WTC11 (cell line): ENCODE measurements at regions of chr14 and their contacts with region 1.

Region 1: GRCh38 chr14:71855399-71856036 is 76.7 kb upstream of the RGS6 start:
- DNase-seq: peak; percentile 87
- ATAC-seq: peak; percentile 84
- H3K4me3 Mint-ChIP-seq: no peak overlapping the region
- H3K27ac Mint-ChIP-seq: no peak overlapping the region
- H3K4me1 Mint-ChIP-seq: peaks cover 15% of the 10 kb centered on the region
- H3K27me3 Mint-ChIP-seq: peaks cover 8% of the 10 kb centered on the region; the same call in 1 of the 2 replicates
- CTCF ChIP-seq: peak; percentile 64

Region 2: DNA sequence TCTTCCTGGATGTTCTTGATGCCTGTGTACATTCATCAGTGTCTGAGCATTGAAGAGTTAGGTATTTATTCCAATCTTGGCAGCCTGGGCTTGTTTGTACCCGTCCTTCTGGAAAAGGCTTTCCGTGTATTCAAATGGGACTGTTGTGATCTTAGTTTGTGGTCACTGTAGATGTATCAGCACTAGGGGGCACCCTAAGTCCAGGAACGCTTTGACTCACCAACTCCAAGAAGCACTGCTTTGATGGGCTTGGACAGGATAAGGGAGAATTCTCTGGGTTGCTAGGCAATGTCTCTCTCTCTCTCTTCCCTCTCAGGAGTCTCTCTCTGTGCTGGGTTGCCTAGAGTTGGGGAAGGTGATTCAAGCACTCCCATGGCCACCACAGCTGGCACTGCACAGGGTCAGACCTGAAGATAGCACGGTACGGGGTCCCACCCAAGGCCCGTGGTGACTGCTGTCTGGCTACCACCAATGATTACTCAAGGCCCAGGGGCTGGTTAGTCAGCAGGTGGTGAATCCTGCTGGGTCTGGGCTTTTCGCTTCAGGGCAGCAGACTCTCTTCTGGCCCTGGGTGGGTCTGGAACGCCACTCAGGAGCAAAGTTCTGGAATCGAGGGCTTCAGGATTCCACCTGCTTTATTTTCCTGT is 134.4 kb before region 1 on chr14:
- CTCF ChIA-PET with region 1: interaction called, 29 read pairs
- POLR2A ChIA-PET with region 1: no interaction called
- DNase-seq: peak; percentile 61
- ATAC-seq: peak; percentile 96
- H3K4me3 Mint-ChIP-seq: no peak overlapping the region
- H3K27ac Mint-ChIP-seq: peak overlapping the region; percentile 71
- H3K4me1 Mint-ChIP-seq: no peaks in the 10 kb centered on the region; the same call in 1 of the 2 replicates
- H3K27me3 Mint-ChIP-seq: no peaks in the 10 kb centered on the region
- CTCF ChIP-seq: peak; percentile 54

Region 3: DNA sequence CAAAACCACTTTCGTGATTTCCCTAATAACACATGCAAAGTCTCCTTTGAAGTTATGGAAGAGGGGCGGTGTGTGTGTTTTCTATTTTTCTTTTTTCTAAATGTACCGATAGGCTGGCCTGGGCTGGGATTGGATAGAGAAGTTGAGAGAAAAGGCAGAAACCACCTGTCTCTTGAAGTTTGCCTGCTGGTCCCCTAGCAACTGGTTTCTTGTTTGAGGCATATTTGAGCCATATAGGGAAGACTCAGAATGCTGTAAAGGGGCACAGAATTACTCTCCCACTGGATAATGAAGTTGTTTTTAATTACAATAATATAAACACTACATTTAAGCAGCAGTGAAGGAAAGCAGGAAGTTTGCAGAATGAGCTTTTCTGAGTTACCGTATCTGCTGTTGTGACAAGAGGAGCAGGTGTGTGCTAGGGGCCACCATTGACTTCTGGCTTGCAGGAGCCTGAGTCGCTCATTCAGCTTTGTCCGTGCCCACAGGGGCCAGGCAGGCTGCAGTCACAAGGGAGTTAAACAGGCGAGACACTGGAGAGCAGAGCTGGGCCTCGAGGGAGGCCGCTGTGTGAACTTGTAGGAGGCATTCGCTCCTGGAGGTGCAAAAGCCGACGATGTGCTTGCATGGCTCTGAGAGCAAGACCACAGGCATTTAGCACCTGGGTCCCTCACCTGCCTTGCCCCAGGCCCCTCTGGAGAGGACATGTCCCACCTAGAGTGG is 97.1 kb before region 1 on chr14:
- CTCF ChIA-PET with region 1: interaction called, 89 read pairs
- POLR2A ChIA-PET with region 1: no interaction called
- DNase-seq: no peak
- ATAC-seq: no peak
- H3K4me3 Mint-ChIP-seq: no peak overlapping the region
- H3K27ac Mint-ChIP-seq: no peak overlapping the region
- H3K4me1 Mint-ChIP-seq: peaks cover 16% of the 10 kb centered on the region
- H3K27me3 Mint-ChIP-seq: no peaks in the 10 kb centered on the region
- CTCF ChIP-seq: no peak

Region 4: GRCh38 chr14:71776471-71777360 is 78.8 kb before region 1 on chr14:
- CTCF ChIA-PET with region 1: interaction called, 14 read pairs
- POLR2A ChIA-PET with region 1: no interaction called
- DNase-seq: no peak
- ATAC-seq: peak; percentile 50
- H3K4me3 Mint-ChIP-seq: no peak overlapping the region
- H3K27ac Mint-ChIP-seq: peak overlapping the region; percentile 19; the same call in 1 of the 2 replicates
- H3K4me1 Mint-ChIP-seq: peaks cover 42% of the 10 kb centered on the region
- H3K27me3 Mint-ChIP-seq: peaks cover 26% of the 10 kb centered on the region
- CTCF ChIP-seq: no peak

Region 5: DNA sequence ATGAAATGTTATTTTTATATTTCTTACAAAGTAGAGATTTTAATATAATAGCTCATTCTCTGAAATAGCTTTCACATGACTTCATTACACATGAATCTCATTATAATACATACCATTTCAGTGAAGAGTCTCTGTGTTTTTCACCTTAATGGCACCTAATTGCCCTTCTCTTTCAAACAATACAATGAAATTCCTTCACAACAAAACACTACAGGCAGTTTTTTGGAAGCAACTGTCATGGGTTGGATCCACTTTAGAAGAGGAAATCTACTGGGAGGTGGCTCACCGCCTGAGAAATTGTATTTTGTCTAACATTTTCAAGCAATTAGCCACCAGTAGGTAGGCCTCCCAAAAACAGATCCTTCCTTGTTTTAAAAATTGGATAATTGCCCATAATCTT is 36.5 kb after region 1 on chr14:
- CTCF ChIA-PET with region 1: interaction called, 15 read pairs
- POLR2A ChIA-PET with region 1: no interaction called
- DNase-seq: no peak
- ATAC-seq: peak; percentile 57
- H3K4me3 Mint-ChIP-seq: peak overlapping the region; percentile 14; the same call in 1 of the 2 replicates
- H3K27ac Mint-ChIP-seq: peak overlapping the region; percentile 83
- H3K4me1 Mint-ChIP-seq: peaks cover 34% of the 10 kb centered on the region
- H3K27me3 Mint-ChIP-seq: peaks cover 6% of the 10 kb centered on the region
- CTCF ChIP-seq: no peak